ENCODE measurements at regions of chr14 and their contacts with region 1.

Region 1: DNA sequence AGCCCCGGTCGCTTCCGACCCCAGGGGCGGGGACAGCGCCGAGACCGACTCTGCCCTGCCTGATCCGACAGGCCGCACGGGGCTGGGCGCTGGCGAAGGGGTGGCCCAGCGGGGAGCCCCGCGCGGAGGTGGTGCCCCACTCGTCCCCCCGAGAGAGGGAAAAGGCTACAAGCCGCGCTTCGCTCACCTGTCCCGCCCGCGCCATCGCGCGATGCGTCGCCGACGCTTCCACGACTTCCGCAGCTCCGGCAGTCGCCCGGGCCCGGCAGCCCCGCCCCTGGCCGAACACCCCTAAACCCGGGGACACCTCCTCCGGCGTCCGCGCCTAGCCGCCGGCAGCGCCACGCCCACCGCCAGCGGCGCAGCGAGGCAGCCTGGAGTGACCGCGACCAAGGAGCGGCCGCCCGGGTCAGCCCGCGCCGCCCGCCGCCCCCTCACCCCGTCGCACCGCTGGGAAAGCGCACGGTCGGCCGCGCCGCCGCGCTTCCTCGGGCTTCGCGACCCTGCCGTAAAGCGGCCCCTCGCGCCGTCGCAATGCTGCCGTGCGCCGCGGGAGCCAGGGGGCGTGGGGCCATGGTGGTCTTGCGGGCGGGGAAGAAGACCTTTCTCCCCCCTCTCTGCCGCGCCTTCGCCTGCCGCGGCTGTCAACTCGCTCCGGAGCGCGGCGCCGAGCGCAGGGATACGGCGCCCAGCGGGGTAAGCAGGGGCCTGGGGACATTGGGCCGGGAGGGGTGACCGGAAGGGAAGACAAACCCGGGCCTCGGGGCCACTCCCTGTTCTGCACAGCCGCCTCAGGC is at the starts of genes BAG5 and COA8:
- DNase-seq: peak; percentile 88
- H3K4me3 Mint-ChIP-seq: peak within 1 kb of the TSS; percentile 95
- H3K27ac Mint-ChIP-seq: peak within 1 kb of the TSS; percentile 85
- H3K4me1 Mint-ChIP-seq: peaks cover 68% of the 10 kb centered on the region
- H3K27me3 Mint-ChIP-seq: no peaks in the 10 kb centered on the region
- total RNA-seq, gene BAG5: 29.1 to 29.9 TPM
- total RNA-seq, gene COA8: 27.5 to 31.0 TPM

Region 2: DNA sequence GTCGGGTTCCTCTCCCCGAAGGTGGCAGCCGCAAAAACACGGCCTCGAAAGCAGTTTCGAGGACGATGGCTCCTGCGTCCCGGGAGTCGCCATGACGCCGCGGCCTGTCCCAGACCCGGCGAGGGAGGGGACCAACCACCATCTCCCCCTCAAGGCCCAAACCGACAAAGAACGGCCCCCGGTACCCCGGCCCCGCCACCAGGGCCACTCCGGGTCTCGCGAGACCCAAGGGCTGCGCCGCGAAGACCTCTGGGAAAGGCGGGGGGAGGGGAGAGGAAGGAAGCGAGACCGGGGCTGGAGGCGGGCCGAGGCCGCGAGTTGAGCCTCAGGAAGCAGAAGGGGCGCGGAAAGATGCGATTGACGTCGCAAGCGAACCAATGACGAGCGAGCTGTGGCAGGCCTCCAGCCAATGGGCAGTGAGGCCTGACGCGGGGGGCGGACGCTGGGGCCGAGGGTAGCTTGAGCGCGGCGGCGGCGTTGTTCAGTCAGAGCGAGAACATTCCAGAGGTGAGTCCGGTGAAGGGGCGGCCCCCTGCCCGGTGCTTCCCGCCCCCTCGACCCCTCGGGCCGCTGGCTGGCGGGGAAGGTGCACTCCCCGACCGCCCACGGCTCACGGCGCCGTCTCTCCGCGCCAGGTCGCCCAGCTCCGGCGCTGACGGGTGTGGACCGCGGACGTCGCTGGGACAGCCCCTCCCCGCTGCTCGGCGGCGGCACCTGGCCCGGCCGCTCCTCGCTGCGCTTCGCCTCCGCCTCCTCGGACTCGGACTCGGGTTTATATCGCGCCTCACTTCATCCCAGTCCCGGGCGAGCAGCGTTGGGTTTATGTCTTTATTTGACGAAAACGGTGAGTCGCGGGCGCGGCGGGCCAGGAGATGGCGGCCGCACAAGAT is 228.6 kb before region 1 on chr14 and contains the start of gene EIF5:
- CTCF ChIA-PET with region 1: interaction called, 3 read pairs
- POLR2A ChIA-PET with region 1: interaction called, 13 read pairs
- DNase-seq: peak; percentile 99
- H3K4me3 Mint-ChIP-seq: peak within 1 kb of the TSS; percentile 86
- H3K27ac Mint-ChIP-seq: peak within 1 kb of the TSS; percentile 92
- H3K4me1 Mint-ChIP-seq: peaks cover 44% of the 10 kb centered on the region
- H3K27me3 Mint-ChIP-seq: no peaks in the 10 kb centered on the region
- total RNA-seq, gene EIF5: 188 to 197 TPM

Region 3: DNA sequence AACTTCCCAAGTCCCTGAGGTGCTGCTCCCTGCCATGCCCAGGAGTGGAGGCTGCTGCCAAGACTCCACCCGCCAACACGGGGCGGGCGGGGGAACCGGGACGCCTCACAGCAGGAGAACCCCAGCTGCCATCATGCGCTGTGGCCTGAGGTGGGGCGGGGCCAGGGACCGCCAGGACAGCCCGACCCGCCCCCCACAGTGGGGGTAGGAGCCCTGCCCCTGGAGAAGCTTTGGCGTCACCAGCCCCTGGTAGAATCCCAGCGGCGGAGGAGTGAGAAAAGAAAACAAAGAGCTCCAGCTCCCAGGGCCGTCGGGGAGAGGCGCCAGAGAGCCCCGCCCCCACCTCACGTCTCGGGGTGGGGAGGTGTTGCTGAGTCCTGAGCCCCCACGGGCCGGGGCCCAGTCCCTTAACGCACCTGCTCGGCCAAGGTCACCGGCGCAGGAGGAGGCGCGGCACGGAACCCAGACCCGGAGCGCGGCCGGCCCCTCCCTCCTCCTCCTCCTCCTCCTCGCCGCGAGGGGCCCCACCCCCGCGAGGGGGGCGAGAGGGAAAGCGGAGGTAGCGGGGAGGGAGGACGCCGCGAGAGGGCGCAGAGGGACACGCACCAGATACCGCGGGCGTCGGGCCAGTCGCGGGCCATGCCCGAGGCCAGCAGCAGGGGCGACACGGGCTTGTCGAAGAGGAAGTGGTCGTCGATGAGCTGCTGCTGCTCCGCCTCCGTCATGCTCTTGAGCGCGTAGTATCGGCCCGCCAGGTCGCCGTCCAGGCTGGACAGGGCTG is 41.8 kb before region 1 on chr14:
- CTCF ChIA-PET with region 1: interaction called, 11 read pairs
- POLR2A ChIA-PET with region 1: interaction called, 3 read pairs
- DNase-seq: peak; percentile 69
- H3K4me3 Mint-ChIP-seq: peak overlapping the region; percentile 58
- H3K27ac Mint-ChIP-seq: no peak overlapping the region
- H3K4me1 Mint-ChIP-seq: peaks cover 9% of the 10 kb centered on the region
- H3K27me3 Mint-ChIP-seq: peaks cover 27% of the 10 kb centered on the region

Region 4: DNA sequence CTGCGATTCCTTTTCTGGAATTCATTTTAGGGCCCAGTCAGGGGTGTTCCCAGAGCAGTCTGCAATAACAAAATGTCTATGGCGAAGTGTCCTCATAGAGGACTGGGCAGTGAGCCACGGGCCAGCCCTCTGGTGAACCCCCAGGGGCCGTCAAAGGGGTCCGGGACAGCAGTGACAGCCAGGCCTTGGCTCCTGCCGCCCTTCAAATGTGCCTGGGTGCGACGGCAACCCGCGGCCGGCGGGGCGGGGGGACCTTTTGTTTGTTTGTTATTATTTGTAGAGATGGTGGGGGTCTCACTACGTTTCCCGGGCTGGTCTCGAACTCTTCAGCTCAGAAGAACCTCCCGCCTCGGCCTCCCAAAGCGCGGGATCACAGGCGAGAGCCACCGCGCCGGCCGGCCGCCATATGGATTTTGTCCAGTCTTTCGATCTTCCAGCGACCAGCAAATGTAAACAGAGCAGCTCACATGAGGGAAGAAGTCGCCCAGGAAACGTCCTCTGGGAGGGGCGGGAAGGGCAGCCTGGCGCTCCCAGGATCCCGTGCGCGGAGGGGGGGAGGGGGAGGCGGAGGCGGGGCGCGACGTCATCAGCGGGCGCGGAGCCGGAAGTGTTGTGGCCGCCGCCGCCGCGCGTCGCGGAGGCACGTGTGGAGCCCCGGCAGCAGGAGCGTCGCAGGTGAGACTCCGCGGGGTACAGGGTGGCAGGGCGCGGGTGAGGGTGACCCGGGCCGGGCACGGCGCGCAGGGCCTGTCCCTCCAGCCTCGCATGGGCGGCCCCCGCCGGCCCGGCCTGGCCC is 33.8 kb before region 1 on chr14 and contains the start of gene TRMT61A:
- CTCF ChIA-PET with region 1: interaction called, 5 read pairs
- POLR2A ChIA-PET with region 1: interaction called, 50 read pairs
- DNase-seq: peak; percentile 82
- H3K4me3 Mint-ChIP-seq: peak within 1 kb of the TSS; percentile 89
- H3K27ac Mint-ChIP-seq: peak within 1 kb of the TSS; percentile 92
- H3K4me1 Mint-ChIP-seq: peaks cover 36% of the 10 kb centered on the region
- H3K27me3 Mint-ChIP-seq: peaks cover 15% of the 10 kb centered on the region
- total RNA-seq, gene TRMT61A: 4.5 to 5.1 TPM

Region 5: DNA sequence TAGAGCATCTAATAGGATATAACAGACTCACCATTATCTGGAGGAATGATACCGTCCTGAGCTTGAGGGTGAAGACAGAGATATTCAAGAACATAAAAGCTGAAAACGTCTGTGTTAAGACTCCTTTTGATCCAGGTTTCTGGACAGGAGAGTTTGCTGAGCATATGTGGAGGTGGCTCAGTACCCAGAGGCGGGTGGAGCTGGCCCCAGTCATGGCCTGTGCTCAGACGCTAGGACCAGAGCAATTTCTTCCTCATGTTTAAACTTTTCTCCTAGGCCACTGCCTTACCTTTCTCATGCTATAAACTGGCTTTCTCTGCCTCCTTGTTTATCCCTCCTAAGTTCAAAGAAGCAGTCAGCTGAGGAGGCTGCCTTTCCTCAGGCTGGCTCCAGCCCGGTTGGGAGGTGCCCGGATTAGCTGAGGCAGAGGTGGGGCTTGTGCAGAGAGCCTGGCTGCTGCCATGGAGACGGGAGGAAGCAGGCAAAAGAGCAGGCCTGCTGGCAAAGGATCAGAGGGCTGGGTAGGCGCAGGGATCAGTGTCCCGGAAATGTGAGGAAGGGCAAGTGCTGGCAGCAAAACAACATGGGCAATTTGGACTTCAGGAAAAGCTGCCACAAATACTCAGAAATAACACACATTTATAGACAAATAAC is 13.9 kb after region 1 on chr14:
- CTCF ChIA-PET with region 1: interaction called, 10 read pairs
- POLR2A ChIA-PET with region 1: interaction called, 3 read pairs
- DNase-seq: no peak
- H3K4me3 Mint-ChIP-seq: no peak overlapping the region
- H3K27ac Mint-ChIP-seq: no peak overlapping the region
- H3K4me1 Mint-ChIP-seq: no peaks in the 10 kb centered on the region
- H3K27me3 Mint-ChIP-seq: no peaks in the 10 kb centered on the region

Region 6: GRCh38 chr14:103628684-103629502 is 66.3 kb after region 1 on chr14 and contains the start of gene KLC1:
- CTCF ChIA-PET with region 1: interaction called, 3 read pairs
- POLR2A ChIA-PET with region 1: interaction called, 26 read pairs
- DNase-seq: peak; percentile 86
- H3K4me3 Mint-ChIP-seq: peak within 1 kb of the TSS; percentile 88
- H3K27ac Mint-ChIP-seq: peak within 1 kb of the TSS; percentile 87
- H3K4me1 Mint-ChIP-seq: peaks cover 49% of the 10 kb centered on the region
- H3K27me3 Mint-ChIP-seq: no peaks in the 10 kb centered on the region
- total RNA-seq, gene KLC1: 152 to 160 TPM